Endothelial cell of umbilical vein (primary cell): ENCODE measurements at regions of chr19 and their contacts with region 1.

Region 1: DNA sequence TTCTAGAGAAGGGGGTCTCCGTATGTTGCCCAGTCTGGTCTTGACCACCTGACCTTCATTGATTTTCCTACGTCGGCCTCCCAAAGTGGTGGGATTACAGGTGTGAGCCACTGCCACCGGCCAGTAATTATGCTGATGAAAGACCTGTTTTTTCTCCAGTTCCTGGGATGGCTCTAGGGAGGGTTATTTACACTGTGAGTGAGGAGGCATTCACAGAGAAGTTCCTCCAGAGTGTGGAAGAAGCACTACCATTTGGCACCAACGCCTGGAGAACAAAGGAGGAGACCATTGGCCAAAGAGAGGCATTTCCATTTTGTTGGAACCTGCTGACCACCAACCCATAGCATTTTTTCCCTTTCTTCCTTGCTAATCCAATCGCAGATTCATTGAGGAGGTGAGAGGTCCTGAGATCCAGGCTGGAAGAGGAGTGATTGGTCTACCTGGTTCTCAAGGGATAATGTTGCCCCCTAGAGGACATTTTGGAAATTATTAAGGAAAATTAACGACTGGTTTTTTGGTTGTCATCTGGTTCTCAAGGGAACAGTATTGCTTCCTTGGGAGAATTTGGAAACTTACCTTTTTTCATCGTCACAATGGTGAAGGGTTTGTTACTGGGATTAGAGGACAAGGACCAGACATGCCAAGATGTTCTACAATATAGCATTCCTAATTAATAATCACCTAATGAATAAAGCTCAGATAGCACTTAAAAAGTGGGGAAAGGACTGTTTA is 5.5 kb upstream of the SAE1 start:
- DNase-seq: peak; percentile 74
- H3K4me3 ChIP-seq: no peak overlapping the region
- H3K27ac ChIP-seq: no peak overlapping the region
- H3K4me1 ChIP-seq: no peaks in the 10 kb centered on the region
- H3K27me3 ChIP-seq: no peaks in the 10 kb centered on the region
- CTCF ChIP-seq: peak; percentile 50 to 53
- POLR2A ChIP-seq: no peak

Region 2: DNA sequence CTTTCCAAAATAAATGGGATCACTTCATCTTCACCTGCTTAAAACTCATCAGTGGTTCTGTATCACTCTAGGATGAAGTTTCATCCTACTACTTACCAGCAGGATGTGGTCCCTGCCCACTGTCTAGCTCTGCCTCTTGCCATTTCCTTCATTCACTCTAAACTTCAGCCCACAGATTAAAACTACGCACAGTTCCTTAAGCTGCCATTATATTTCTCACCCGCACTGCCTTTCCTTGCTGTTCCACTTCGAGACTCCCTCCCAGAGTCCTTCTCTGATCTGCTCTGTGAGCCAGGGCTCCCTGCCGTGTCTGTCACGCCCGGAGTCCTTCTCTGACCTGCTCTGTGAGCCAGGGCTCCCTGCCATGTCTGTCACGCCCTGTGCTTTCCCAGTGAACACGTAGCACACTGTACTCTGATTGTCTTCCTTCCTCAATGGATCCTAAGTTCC is 157.5 kb before region 1 on chr19:
- CTCF ChIA-PET with region 1: no interaction called
- POLR2A ChIA-PET with region 1: no interaction called
- dilution Hi-C with region 1: no loop called
- intact Hi-C with region 1: no loop called
- DNase-seq: no peak
- H3K4me3 ChIP-seq: no peak overlapping the region
- H3K27ac ChIP-seq: no peak overlapping the region
- H3K4me1 ChIP-seq: peaks cover 10% of the 10 kb centered on the region
- H3K27me3 ChIP-seq: no peaks in the 10 kb centered on the region
- CTCF ChIP-seq: no peak
- POLR2A ChIP-seq: no peak

Region 3: GRCh38 chr19:47035127-47036096 is 89.7 kb before region 1 on chr19:
- CTCF ChIA-PET with region 1: interaction called, 17 read pairs
- POLR2A ChIA-PET with region 1: no interaction called
- dilution Hi-C with region 1: no loop called
- intact Hi-C with region 1: loop called (anchors 1 kb)
- DNase-seq: peak; percentile 92
- H3K4me3 ChIP-seq: peak overlapping the region; percentile 32 to 75 (median 73)
- H3K27ac ChIP-seq: no peak overlapping the region
- H3K4me1 ChIP-seq: peaks cover 8% of the 10 kb centered on the region
- H3K27me3 ChIP-seq: peaks cover 0 to 2% of the 10 kb centered on the region in 2 experiments
- CTCF ChIP-seq: peak; percentile 84 to 94
- POLR2A ChIP-seq: no peak

Region 4: GRCh38 chr19:47081111-47081510 is 44.0 kb before region 1 on chr19:
- CTCF ChIA-PET with region 1: interaction called, 110 read pairs
- POLR2A ChIA-PET with region 1: no interaction called
- dilution Hi-C with region 1: no loop called
- intact Hi-C with region 1: loop called (anchors 1 kb)
- DNase-seq: no peak
- H3K4me3 ChIP-seq: no peak overlapping the region
- H3K27ac ChIP-seq: no peak overlapping the region
- H3K4me1 ChIP-seq: no peaks in the 10 kb centered on the region
- H3K27me3 ChIP-seq: no peaks in the 10 kb centered on the region
- CTCF ChIP-seq: no peak
- POLR2A ChIP-seq: no peak